ENCODE measurements at regions of chr20 and their contacts with region 1.

Region 1: DNA sequence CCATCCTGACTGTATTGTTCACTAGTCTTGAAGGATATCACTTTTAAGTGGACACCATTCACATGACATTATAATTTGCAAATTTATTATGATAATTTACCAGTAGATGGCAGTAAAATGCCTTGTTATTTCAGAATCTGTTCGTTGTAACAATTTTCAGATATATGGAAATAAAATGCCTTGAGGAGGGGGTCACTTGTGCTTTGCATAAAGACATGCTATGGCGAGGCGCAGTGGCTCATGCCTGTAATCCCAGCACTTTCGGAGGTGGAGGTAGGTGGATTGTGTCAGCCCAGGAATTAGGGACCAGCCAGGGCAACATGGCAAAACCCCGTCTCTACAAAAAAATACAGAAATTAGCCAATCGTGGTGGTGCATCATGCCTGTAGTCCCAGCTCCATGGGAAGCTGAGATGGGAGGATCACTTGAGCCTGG is 9.0 kb upstream of the NCOA6 start:
- DNase-seq: no peak
- ATAC-seq: peak; percentile 42
- H3K4me3 Mint-ChIP-seq: no peak overlapping the region
- H3K27ac Mint-ChIP-seq: no peak overlapping the region
- H3K4me1 Mint-ChIP-seq: no peaks in the 10 kb centered on the region
- H3K27me3 Mint-ChIP-seq: peaks cover 8% of the 10 kb centered on the region

Region 2: DNA sequence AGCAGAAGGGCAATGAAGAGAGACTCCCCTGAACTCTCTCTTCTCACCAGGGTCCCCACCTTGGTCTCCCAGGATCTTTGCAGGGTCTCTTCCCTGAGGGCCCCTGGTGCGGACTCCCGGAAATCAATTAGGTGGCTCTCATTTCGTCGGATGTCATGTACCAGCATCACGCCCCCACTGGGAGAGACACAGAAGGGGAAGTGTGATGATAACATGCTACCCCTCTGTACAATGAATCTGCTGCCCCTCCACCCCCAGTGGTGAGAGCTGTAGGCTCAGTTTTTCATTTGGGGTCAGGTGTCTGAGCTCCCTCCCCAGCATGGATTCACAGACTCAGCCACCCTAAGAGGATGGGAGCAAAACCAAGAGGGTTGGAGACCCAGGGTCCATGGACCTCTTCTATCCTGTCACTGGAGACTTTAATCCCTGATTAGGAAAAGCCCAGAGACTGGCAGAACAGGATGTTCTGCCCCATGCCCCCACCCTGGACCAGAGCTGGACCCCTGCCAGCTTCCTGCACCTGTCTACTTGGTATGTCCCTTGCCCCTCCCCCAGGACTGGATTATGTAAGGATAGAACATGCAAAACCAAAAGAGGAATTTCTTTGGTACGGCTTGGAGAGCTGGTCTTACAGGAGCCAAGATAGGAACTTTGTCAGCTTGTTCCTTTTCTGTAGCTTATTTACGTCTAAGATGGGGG is 27.1 kb after region 1 on chr20:
- CTCF ChIA-PET with region 1: no interaction called
- POLR2A ChIA-PET with region 1: no interaction called
- intact Hi-C with region 1: no loop called
- DNase-seq: no peak
- ATAC-seq: no peak
- H3K4me3 Mint-ChIP-seq: no peak overlapping the region
- H3K27ac Mint-ChIP-seq: no peak overlapping the region
- H3K4me1 Mint-ChIP-seq: no peaks in the 10 kb centered on the region
- H3K27me3 Mint-ChIP-seq: no peaks in the 10 kb centered on the region

Region 3: GRCh38 chr20:35207950-35208611 is 373.6 kb after region 1 on chr20:
- CTCF ChIA-PET with region 1: interaction called, 3 read pairs
- POLR2A ChIA-PET with region 1: no interaction called
- intact Hi-C with region 1: loop called (anchors 1 kb)
- DNase-seq: peak; percentile 88
- ATAC-seq: peak; percentile 95
- H3K4me3 Mint-ChIP-seq: no peak overlapping the region
- H3K27ac Mint-ChIP-seq: no peak overlapping the region
- H3K4me1 Mint-ChIP-seq: no peaks in the 10 kb centered on the region
- H3K27me3 Mint-ChIP-seq: no peaks in the 10 kb centered on the region

Region 4: GRCh38 chr20:35269055-35269781 is 434.7 kb after region 1 on chr20:
- CTCF ChIA-PET with region 1: no interaction called
- POLR2A ChIA-PET with region 1: no interaction called
- intact Hi-C with region 1: loop called in 1 of 2 experiments (anchors 1 kb)
- DNase-seq: peak; percentile 74
- ATAC-seq: peak; percentile 82
- H3K4me3 Mint-ChIP-seq: no peak overlapping the region
- H3K27ac Mint-ChIP-seq: no peak overlapping the region
- H3K4me1 Mint-ChIP-seq: no peaks in the 10 kb centered on the region
- H3K27me3 Mint-ChIP-seq: no peaks in the 10 kb centered on the region